Transverse colon (tissue), 4 donors: ENCODE measurements at regions of chr22 and their contacts with region 1.

Region 1: DNA sequence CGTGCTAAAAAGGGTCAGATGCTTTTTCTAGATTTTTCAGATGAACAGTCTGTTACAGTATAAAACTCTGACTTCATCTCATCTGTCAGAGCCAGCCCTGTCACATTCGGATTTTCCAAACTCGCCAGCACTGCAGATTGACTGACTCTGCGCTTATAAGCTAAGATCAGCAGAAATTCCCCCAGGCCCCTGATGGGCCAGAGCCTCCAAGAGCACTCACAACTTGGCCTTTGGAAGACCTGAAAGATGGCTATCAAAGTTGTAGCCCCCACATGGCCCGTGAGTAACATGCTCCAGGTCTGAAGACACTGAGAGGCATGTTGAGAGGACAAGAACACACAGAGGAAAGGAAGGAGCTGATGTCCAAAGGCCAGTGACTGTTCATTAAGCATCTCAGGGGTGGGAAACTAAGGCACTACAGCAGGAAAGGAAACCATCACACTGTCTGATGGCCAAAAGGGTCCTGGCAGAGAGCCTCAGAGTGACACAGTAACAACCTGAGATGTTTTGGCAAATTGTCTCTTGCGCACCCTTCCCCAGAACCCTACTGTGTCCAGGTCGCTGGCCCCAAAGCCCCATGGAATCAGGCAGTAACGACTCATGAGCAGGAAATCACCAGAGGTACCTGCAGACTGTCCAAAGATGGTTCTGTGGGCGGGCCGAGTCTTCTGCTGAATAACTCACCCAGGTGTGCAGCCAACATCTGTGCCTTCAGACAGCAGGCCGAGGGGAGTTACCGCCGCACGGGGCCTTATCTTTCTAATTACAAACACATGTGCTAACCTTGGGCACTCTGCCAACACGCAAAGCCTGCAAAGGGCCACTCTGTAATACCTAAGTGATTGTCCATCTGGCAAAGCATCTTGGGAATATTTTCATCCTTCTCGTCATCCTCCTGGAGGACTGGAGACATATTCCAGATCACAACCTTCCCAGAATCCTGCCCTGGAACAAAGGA is 23.6 kb downstream of the HIRA start:
- DNase-seq: no peak
- H3K4me3 ChIP-seq: no peak overlapping the region
- H3K27ac ChIP-seq: no peak overlapping the region
- H3K4me1 ChIP-seq: no peaks in the 10 kb centered on the region
- H3K27me3 ChIP-seq: no peaks in the 10 kb centered on the region
- CTCF ChIP-seq: no peak
- EP300 ChIP-seq: no peak
- POLR2A ChIP-seq: no peak

Region 2: DNA sequence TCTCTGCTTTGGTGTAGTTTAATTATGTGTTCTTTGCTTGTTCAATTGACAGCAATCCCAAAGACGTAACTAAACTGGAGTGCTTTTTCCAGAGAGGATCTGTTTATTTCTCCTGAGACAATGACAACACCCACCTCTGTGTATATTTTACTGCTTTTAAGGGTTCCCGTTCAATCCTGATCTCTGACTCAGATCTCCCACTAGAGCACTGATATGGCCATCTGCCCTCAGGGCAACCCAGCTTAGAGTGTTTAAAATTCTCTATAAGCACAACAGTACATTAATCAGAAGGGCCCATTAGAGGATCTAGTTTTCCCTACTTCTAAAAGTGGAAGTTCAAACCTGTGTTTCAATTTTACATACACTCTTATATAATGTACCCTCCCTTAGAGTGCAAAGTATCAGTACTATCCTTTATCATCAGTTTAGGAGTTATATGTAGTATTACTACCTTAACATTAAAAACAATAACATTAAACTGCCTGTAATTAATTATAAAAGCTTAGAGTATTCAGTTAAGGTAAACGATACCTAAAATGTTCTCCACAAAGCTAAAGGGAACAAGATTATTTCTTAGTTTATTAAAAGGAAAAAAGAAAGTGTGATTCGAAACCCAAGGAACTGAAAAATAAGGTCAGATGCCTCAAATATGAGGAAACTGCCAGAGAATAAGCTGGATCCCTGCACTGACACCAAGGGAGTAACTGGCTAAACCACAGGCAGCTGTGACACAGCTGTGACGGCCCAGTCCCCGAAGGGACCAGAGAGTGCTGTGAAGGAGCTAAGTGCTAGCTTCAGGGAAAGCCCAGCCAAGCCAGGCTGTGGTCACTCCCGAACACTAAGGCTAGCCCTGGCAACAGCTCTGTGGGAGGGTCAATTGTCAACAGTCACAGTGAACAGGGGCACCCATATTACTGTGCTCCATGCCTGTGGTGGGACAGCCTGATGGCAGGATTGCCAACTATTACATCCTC is 55.9 kb after region 1 on chr22:
- in situ Hi-C with region 1: loop called in 1 of 4 experiments (anchors 10 kb)
- intact Hi-C with region 1: no loop called
- DNase-seq: no peak
- H3K4me3 ChIP-seq: no peak overlapping the region
- H3K27ac ChIP-seq: no peak overlapping the region
- H3K4me1 ChIP-seq: no peaks in the 10 kb centered on the region
- H3K27me3 ChIP-seq: no peaks in the 10 kb centered on the region
- CTCF ChIP-seq: no peak
- EP300 ChIP-seq: no peak
- POLR2A ChIP-seq: no peak